AG04449 (cell line): ENCODE measurements at regions of chr15 and their contacts with region 1.

Region 1: GRCh38 chr15:73660455-73660854 is 23.7 kb upstream of the CD276 start:
- DNase-seq: no peak
- H3K4me3 ChIP-seq: no peak overlapping the region
- CTCF ChIP-seq: no peak

Region 2: GRCh38 chr15:73054417-73054953 is 606.0 kb before region 1 on chr15:
- CTCF ChIA-PET with region 1: no interaction called
- POLR2A ChIA-PET with region 1: no interaction called
- DNase-seq: no peak
- H3K4me3 ChIP-seq: no peak overlapping the region
- CTCF ChIP-seq: no peak

Region 3: GRCh38 chr15:73573572-73573971 is 86.9 kb before region 1 on chr15:
- CTCF ChIA-PET with region 1: no interaction called
- POLR2A ChIA-PET with region 1: no interaction called
- DNase-seq: peak; percentile 70
- H3K4me3 ChIP-seq: no peak overlapping the region
- CTCF ChIP-seq: no peak

Region 4: GRCh38 chr15:73677146-73677607 is 16.7 kb after region 1 on chr15:
- CTCF ChIA-PET with region 1: interaction called, 29 read pairs
- POLR2A ChIA-PET with region 1: no interaction called
- DNase-seq: no peak
- H3K4me3 ChIP-seq: no peak overlapping the region
- CTCF ChIP-seq: peak; percentile 81